Heart left ventricle (tissue), 16 donors: ENCODE measurements at regions of chr5 and their contacts with region 1.

Region 1: GRCh38 chr5:54243473-54244080 is 66.8 kb downstream of the ARL15 start:
- DNase-seq: peak in 1 of 5 donors; percentile 15
- ATAC-seq: peak in 1 of 4 donors; percentile 47
- H3K4me3 ChIP-seq: no peak overlapping the region
- H3K27ac ChIP-seq: peak overlapping the region in 1 of 12 donors; percentile 6
- H3K4me1 ChIP-seq: peaks cover 0 to 41% (median 8%) of the 10 kb centered on the region in 12 donors
- H3K27me3 ChIP-seq: no peaks in the 10 kb centered on the region
- CTCF ChIP-seq: peak; percentile 37 to 75 (median 65)
- POLR2A ChIP-seq: no peak

Region 2: GRCh38 chr5:54295651-54296276 is 52.2 kb after region 1 on chr5:
- intact Hi-C with region 1: no loop called
- DNase-seq: peak in 4 of 5 donors; percentile 29 to 68 (median 38)
- ATAC-seq: peak; percentile 91 to 96 (median 94)
- H3K4me3 ChIP-seq: peak overlapping the region in 7 of 12 donors; percentile 3 to 26 (median 13)
- H3K27ac ChIP-seq: peak overlapping the region in 11 of 12 donors; percentile 42 to 87 (median 70)
- H3K4me1 ChIP-seq: peaks cover 0 to 63% (median 36%) of the 10 kb centered on the region in 12 donors
- H3K27me3 ChIP-seq: no peaks in the 10 kb centered on the region
- CTCF ChIP-seq: no peak
- POLR2A ChIP-seq: no peak

Region 3: GRCh38 chr5:54696931-54697330 is 453.4 kb after region 1 on chr5:
- intact Hi-C with region 1: no loop called
- DNase-seq: peak in 1 of 5 donors; percentile 46
- ATAC-seq: peak in 2 of 4 donors; percentile 19 to 35
- H3K4me3 ChIP-seq: no peak overlapping the region
- H3K27ac ChIP-seq: peak overlapping the region in 2 of 12 donors; percentile 11 to 45
- H3K4me1 ChIP-seq: peaks cover 0 to 44% (median 18%) of the 10 kb centered on the region in 12 donors
- H3K27me3 ChIP-seq: no peaks in the 10 kb centered on the region
- CTCF ChIP-seq: no peak
- POLR2A ChIP-seq: no peak

Region 4: GRCh38 chr5:54867310-54867944 is 623.9 kb after region 1 on chr5:
- intact Hi-C with region 1: loop called in 1 of 10 experiments (anchors 10 kb)
- DNase-seq: no peak
- ATAC-seq: peak in 2 of 4 donors; percentile 36 to 45
- H3K4me3 ChIP-seq: peak overlapping the region in 7 of 12 donors; percentile 4 to 46 (median 19)
- H3K27ac ChIP-seq: no peak overlapping the region
- H3K4me1 ChIP-seq: peaks cover 0 to 7% (median 0%) of the 10 kb centered on the region in 12 donors
- H3K27me3 ChIP-seq: no peaks in the 10 kb centered on the region
- CTCF ChIP-seq: peak; percentile 58 to 78 (median 74)
- POLR2A ChIP-seq: no peak